Activated CD4-positive, alpha-beta T cell treated with anti-CD3 and anti-CD28 coated beads for 36 hours (primary cell): ENCODE measurements at regions of chr5 and their contacts with region 1.

Region 1: GRCh38 chr5:131357739-131358561 is 94.1 kb downstream of the CDC42SE2 start:
- DNase-seq: peak; percentile 66
- ATAC-seq: peak; percentile 91
- H3K4me3 Mint-ChIP-seq: peak overlapping the region; percentile 59
- H3K27ac Mint-ChIP-seq: peak overlapping the region; percentile 94
- H3K4me1 Mint-ChIP-seq: peaks cover 69% of the 10 kb centered on the region
- H3K27me3 Mint-ChIP-seq: no peaks in the 10 kb centered on the region

Region 2: DNA sequence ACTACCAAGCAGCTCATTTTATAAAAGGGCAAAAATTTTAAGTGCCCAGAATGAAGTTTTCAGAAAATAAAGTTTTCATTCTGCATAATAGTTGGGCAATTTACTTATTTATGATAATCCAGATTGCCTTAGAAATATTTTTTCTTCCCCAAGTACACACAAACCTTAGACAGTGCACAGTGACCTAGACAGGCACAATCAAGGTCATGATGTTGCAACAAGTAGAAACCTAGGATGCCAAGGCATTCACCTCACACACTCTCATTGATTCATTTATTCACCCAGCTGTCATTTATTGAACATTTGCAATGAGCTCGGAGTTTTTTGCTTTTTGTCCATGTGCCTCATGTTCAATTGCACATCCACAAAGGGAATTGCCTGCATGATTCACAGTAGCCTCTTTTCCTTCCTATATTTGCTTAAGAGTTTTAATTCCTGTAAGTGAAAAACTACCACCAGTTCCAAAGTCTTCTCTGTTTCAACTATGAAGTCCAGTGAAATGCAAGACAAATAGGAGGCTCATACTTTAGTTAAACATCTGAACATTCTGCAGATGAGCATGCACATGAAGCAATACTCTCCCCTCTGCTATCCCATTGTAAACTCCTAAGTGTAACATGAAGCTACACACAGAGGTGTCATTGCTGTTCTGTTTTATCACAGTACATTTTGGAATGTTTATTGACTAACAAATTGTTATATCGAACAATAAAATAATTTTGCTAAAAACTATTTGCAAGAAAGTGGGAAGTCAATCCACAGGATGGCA is 315.7 kb before region 1 on chr5:
- CTCF ChIA-PET with region 1: no interaction called
- POLR2A ChIA-PET with region 1: no interaction called
- intact Hi-C with region 1: no loop called
- DNase-seq: no peak
- ATAC-seq: no peak
- H3K4me3 Mint-ChIP-seq: no peak overlapping the region
- H3K27ac Mint-ChIP-seq: no peak overlapping the region
- H3K4me1 Mint-ChIP-seq: no peaks in the 10 kb centered on the region
- H3K27me3 Mint-ChIP-seq: no peaks in the 10 kb centered on the region

Region 3: GRCh38 chr5:131281133-131281867 is 76.7 kb before region 1 on chr5:
- CTCF ChIA-PET with region 1: no interaction called
- POLR2A ChIA-PET with region 1: interaction called, 6 read pairs
- intact Hi-C with region 1: loop called in 1 of 2 experiments (anchors 2 kb)
- DNase-seq: no peak
- ATAC-seq: peak; percentile 78
- H3K4me3 Mint-ChIP-seq: peak overlapping the region; percentile 74
- H3K27ac Mint-ChIP-seq: peak overlapping the region; percentile 95
- H3K4me1 Mint-ChIP-seq: peaks cover 90% of the 10 kb centered on the region
- H3K27me3 Mint-ChIP-seq: no peaks in the 10 kb centered on the region

Region 4: DNA sequence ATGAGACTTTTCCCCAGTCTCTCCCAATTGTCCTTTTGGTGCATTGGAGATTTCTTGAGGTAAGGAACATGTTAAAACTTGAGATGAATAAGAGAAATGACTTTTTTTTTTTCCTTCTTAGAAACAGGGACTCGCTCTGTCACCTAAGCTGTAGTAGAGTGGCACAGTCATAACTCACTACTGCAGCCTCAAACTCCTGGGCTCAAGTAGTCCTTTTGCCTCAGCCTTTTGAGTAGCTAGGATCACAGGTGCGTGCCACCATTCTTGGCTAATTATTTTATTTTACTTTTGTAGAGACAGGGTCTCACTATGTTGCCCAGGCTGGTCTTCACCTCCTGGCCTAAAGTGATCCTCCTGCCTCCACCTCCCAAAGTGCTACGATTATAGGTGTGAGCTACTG is 68.2 kb before region 1 on chr5:
- CTCF ChIA-PET with region 1: no interaction called
- POLR2A ChIA-PET with region 1: interaction called, 6 read pairs
- intact Hi-C with region 1: loop called (anchors 1 to 2 kb)
- DNase-seq: peak; percentile 61
- ATAC-seq: peak; percentile 80
- H3K4me3 Mint-ChIP-seq: peak overlapping the region; percentile 64
- H3K27ac Mint-ChIP-seq: peak overlapping the region; percentile 98
- H3K4me1 Mint-ChIP-seq: peaks cover 72% of the 10 kb centered on the region
- H3K27me3 Mint-ChIP-seq: no peaks in the 10 kb centered on the region